G401 (cell line): ENCODE measurements at regions of chr10 and their contacts with region 1.

Region 1: GRCh38 chr10:102596506-102596971 is 47.7 kb upstream of the TRIM8 start:
- DNase-seq: peak; percentile 84

Region 2: DNA sequence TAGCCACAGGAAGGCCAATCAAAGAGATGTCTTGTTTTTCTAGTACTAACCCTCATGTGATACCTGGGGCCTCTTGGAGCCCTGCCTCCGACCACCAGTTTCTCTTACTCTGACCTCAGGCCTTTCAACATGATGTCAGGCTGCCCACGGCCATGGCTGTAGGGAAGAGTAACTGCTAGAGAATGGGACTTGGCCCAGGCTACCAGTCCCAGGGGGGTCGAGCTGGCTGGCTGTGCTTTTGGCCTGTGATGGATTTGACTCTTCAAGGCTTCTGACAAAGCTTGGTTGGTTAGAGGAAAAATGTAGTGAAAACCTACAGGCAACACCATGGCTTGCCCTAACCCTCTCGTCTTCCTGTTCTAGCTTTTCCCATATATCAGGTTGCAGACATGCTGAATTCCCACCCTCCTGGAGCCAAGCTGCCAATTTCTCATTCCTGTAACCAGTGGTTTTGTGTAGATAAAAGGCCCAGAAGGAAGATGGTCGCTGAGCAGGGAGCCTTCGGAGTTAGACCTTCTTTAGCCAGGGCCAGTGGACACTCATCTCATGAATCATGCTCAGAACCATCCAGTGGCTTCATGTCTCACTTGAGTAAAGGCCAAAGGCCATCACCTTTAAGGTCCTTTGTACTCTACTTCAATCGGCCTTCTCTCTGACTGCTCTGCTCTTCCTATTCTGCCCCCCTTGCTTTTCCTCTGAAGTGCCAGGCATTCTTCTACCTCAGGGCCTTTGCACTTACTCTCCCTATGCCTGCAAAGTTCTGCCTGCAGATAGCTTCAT is 73.1 kb before region 1 on chr10:
- in situ Hi-C with region 1: loop called (anchors 10 kb)
- DNase-seq: no peak

Region 3: GRCh38 chr10:102743588-102744373 is 147.2 kb after region 1 on chr10 and contains the start of gene WBP1L:
- in situ Hi-C with region 1: no loop called
- DNase-seq: peak; percentile 100
- total RNA-seq, gene WBP1L: 13.6 and 16.6 TPM in 2 replicates